Psoas muscle (tissue), 8 donors: ENCODE measurements at regions of chr4 and their contacts with region 1.

Region 1: GRCh38 chr4:172707605-172708004 is 461.0 kb upstream of the GALNT7 start:
- DNase-seq: no peak
- ATAC-seq: no peak
- H3K4me3 ChIP-seq: no peak overlapping the region
- H3K27ac ChIP-seq: no peak overlapping the region
- H3K4me1 ChIP-seq: no peaks in the 10 kb centered on the region
- H3K27me3 ChIP-seq: peaks cover 0 to 3% (median 0%) of the 10 kb centered on the region in 3 donors
- CTCF ChIP-seq: no peak

Region 2: GRCh38 chr4:173159791-173160190 is 452.2 kb after region 1 on chr4:
- intact Hi-C with region 1: no loop called
- DNase-seq: no peak
- ATAC-seq: no peak
- H3K4me3 ChIP-seq: no peak overlapping the region
- H3K27ac ChIP-seq: no peak overlapping the region
- H3K4me1 ChIP-seq: no peaks in the 10 kb centered on the region
- H3K27me3 ChIP-seq: no peaks in the 10 kb centered on the region
- CTCF ChIP-seq: no peak

Region 3: GRCh38 chr4:174461466-174462106 is 1754.0 kb after region 1 on chr4:
- intact Hi-C with region 1: loop called in 1 of 2 experiments (anchors 10 kb)
- DNase-seq: no peak
- ATAC-seq: no peak
- H3K4me3 ChIP-seq: no peak overlapping the region
- H3K27ac ChIP-seq: no peak overlapping the region
- H3K4me1 ChIP-seq: no peaks in the 10 kb centered on the region
- H3K27me3 ChIP-seq: no peaks in the 10 kb centered on the region
- CTCF ChIP-seq: no peak